Posterior vena cava (tissue), 2 donors: ENCODE measurements at regions of chr2 and their contacts with region 1.

Region 1: DNA sequence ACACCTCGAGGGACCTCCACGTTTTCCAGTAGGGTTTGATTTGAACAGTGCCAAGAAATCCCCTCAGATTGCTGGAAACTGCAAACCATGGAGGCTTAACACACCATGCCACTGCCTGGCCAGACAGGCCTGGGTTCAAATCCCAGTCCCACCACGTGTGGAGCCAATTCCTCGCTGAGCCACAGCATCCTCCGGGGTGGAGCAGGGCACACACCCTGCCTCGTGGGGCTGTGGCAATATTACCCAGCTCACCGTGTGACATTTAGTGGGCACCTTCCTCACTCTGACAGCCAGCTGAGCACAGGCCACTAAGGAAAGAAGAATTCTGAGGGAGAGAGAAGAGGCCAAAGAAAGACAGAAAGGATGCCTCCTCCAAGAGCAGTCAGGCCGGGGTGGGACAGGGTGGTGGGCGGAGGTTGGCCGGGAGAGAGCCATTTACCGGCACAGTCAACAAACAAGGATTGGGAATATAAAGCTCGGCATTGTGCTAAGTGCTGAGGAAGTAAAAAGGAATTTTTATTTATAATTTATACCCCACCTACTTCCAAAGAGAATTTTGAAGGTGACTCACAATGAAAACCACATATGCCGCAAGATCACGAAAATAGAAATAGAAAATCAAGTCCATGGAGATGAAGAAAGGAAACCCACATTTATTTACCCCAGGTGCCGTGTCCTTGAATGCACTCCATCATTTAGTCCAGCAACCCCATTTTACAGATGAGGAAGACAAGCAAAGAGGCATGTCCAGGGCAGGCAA is 111.5 kb downstream of the MCFD2 start:
- DNase-seq: no peak

Region 2: GRCh38 chr2:45681675-45682074 is 1122.4 kb before region 1 on chr2:
- intact Hi-C with region 1: no loop called
- DNase-seq: no peak

Region 3: GRCh38 chr2:46650556-46651001 is 153.5 kb before region 1 on chr2:
- intact Hi-C with region 1: loop called in 1 of 2 experiments (anchors 10 kb)
- DNase-seq: no peak

Region 4: DNA sequence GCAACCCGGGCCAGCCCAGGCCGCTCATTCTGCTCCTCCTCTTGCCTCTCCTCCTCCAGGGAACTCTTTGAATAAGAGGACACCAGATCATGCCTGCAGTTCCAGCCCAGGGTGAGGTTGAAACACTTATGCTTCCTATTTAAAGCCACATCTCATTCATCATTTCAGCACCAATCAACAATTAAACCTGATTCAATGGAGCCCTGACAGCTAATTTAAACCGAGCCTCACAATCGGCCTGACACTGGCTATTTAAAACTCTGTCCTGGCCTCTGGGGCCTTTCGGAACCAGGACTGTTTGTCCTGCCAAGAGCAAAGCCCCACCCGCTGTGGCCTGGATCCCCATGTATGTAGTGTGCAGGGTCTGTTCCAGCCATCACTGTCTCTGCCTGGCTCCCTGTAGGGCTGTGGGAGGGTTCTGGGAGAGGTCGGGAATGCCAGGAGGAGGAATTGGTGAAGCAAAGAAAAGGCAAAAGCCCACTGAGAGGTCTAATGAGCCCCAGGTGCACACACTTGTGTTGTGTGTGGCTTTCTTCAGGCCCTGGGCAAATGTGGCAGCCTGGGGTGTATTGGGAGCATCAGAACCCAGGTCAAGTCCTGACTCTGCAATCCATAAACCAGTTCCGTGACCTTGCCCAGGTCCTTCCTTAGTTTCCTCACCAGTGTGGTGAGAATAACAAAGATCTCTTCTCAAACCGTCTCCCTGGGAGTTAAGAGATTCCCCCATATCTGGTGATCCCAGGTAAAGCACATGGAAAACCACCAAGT is 14.2 kb after region 1 on chr2:
- intact Hi-C with region 1: no loop called
- DNase-seq: peak; percentile 94

Region 5: DNA sequence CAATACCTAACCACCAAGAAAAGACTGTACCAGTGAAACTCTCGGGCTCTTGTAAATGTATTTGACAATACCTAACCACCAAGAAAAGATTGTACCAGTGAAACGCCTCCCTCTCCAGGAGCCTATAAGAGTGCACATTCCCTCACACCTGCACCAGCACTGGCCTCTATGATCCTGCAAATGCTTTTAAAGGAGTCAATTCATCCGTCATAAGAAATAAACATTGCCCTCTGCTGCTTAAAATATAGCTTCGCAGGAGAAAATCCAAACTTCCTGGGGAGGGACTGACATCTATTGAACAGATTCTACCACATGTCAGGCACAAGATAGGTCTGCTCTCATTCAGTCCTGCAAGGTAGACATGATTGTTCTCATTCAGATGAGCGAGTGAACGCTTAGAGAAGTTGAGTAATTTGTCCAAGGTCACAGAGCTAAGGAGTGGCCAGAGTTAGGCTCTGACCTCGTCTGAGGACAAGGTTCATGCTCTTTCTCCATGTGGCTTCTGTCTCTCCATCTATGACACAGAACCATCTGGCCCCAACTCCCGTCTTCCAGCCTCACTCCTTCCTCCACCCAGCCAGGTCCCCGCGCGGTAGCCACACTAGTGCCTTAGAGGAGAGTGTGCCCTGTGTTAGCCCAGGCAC is 72.8 kb after region 1 on chr2:
- intact Hi-C with region 1: loop called (anchors 5 to 10 kb)
- DNase-seq: no peak